ENCODE measurements at regions of chr14 and their contacts with region 1.

Region 1: DNA sequence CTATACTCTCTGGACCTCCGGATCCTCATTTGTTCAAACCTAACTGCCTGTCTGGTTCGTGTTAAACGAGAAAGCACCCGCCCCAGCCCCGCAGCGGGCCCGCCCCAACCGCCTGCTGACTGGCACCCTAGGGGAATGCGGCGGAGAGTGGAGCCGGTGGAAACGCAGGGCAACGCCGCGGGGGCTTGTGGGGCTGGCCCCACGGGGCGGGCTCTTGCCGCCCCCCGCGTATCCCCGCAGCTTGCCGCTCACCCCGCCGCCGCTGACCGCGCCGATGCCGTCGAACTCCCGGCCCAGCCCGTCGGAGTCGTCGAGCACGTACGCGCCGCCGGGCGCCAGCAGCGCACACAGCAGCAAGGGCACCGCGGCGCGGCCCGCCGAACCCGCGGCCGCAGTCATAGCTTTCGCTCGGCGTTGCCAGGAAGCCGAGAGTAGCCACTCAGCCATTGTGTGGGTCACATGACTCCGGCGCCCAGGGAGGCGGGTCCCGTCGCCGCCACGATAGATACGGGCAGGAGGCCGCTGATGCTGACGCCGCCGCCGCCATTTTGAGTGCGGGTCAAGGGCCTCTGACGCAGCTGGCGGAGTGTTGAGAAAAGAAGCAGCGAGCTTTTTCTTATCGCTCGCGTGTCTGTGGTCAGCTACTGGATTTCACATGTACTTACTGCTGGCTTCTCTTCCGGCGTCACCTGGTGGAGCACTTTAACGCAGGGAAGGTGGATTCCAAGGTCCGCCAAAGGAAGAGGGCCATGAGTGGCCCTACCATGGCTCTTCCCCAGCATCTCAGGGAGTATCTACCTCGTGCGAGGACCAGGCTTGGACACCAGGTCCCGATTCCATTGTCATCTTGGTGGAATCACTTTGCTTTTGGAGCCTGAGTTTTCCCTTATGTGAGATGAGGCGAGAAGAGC is at the start of gene GALC:
- DNase-seq: peak; percentile 89
- ATAC-seq: peak; percentile 80
- H3K4me3 Mint-ChIP-seq: peak within 1 kb of the TSS; percentile 89
- H3K27ac Mint-ChIP-seq: peak within 1 kb of the TSS; percentile 99
- H3K4me1 Mint-ChIP-seq: peaks cover 41% of the 10 kb centered on the region
- H3K27me3 Mint-ChIP-seq: no peaks in the 10 kb centered on the region
- CTCF ChIP-seq: no peak
- total RNA-seq, gene GALC: 8.3 and 9.7 TPM in 2 replicates

Region 2: GRCh38 chr14:87952307-87953094 is 40.5 kb before region 1 on chr14:
- CTCF ChIA-PET with region 1: interaction called, 5 read pairs
- POLR2A ChIA-PET with region 1: interaction called, 12 read pairs
- intact Hi-C with region 1: loop called (anchors 5 kb)
- DNase-seq: no peak
- ATAC-seq: peak; percentile 57
- H3K4me3 Mint-ChIP-seq: peak overlapping the region; percentile 64
- H3K27ac Mint-ChIP-seq: peak overlapping the region; percentile 69
- H3K4me1 Mint-ChIP-seq: peaks cover 24% of the 10 kb centered on the region
- H3K27me3 Mint-ChIP-seq: no peaks in the 10 kb centered on the region
- CTCF ChIP-seq: no peak

Region 3: GRCh38 chr14:88005978-88006851 is 13.2 kb after region 1 on chr14:
- CTCF ChIA-PET with region 1: interaction called, 12 read pairs
- POLR2A ChIA-PET with region 1: interaction called, 131 read pairs
- intact Hi-C with region 1: loop called (anchors 1 kb)
- DNase-seq: no peak
- ATAC-seq: peak; percentile 79
- H3K4me3 Mint-ChIP-seq: peak overlapping the region; percentile 83
- H3K27ac Mint-ChIP-seq: peak overlapping the region; percentile 84
- H3K4me1 Mint-ChIP-seq: peaks cover 77% of the 10 kb centered on the region
- H3K27me3 Mint-ChIP-seq: no peaks in the 10 kb centered on the region
- CTCF ChIP-seq: no peak

Region 4: GRCh38 chr14:88075269-88075981 is 82.5 kb after region 1 on chr14:
- CTCF ChIA-PET with region 1: no interaction called
- POLR2A ChIA-PET with region 1: no interaction called
- intact Hi-C with region 1: no loop called
- DNase-seq: no peak
- ATAC-seq: no peak
- H3K4me3 Mint-ChIP-seq: no peak overlapping the region
- H3K27ac Mint-ChIP-seq: no peak overlapping the region
- H3K4me1 Mint-ChIP-seq: peaks cover 4% of the 10 kb centered on the region
- H3K27me3 Mint-ChIP-seq: peaks cover 2% of the 10 kb centered on the region
- CTCF ChIP-seq: no peak

Region 5: DNA sequence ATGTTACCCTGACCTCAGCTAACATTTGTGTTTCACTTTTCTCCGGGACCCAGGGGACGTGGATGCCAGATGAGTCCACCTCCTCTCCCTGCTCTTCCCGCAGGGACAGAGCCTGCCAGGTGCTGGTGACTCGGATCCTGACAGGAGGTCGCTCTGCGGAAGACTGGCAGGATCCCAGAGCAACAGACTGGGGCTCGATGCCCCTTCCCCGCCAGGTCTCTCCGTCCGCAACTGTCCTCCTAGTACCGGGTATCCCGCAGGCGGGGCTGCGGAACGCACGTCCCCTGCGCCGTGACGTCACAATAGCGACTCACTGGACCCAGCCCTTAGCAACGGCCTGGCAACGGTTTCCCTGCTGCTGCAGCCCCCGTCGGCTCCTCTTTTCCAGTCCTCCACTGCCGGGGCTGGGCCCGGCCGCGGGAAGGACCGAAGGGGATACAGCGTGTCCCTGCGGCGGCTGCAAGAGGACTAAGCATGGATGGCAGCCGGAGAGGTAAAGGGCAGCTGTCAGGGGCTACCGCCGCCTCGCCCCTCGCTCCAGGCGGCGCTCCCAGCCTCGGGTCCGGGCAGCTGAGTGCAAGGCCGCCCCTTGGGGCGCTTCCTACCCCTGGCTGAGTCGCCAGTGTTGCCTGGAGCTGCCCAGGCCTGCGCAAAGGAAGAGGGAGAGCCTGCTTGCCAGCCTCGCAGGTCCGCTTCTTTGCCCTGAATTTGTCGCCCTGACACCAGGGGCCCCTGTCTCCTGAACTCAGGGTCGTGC is 392.6 kb after region 1 on chr14 and contains the start of gene SPATA7:
- CTCF ChIA-PET with region 1: no interaction called
- POLR2A ChIA-PET with region 1: no interaction called
- intact Hi-C with region 1: loop called (anchors 1 kb)
- DNase-seq: peak; percentile 71
- ATAC-seq: peak; percentile 94
- H3K4me3 Mint-ChIP-seq: peak within 1 kb of the TSS; percentile 94
- H3K27ac Mint-ChIP-seq: peak within 1 kb of the TSS; percentile 68
- H3K4me1 Mint-ChIP-seq: peaks cover 15% of the 10 kb centered on the region
- H3K27me3 Mint-ChIP-seq: peaks cover 2% of the 10 kb centered on the region
- CTCF ChIP-seq: no peak
- total RNA-seq, gene SPATA7: 1.4 and 1.6 TPM in 2 replicates

Region 6: GRCh38 chr14:89720741-89721315 is 1727.9 kb after region 1 on chr14:
- CTCF ChIA-PET with region 1: no interaction called
- POLR2A ChIA-PET with region 1: no interaction called
- intact Hi-C with region 1: loop called (anchors 5 kb)
- DNase-seq: peak; percentile 45
- ATAC-seq: peak; percentile 90
- H3K4me3 Mint-ChIP-seq: peak overlapping the region; percentile 69
- H3K27ac Mint-ChIP-seq: peak overlapping the region; percentile 95
- H3K4me1 Mint-ChIP-seq: peaks cover 66% of the 10 kb centered on the region
- H3K27me3 Mint-ChIP-seq: no peaks in the 10 kb centered on the region
- CTCF ChIP-seq: no peak